ENCODE measurements at regions of chr20 and their contacts with region 1.

Region 1: DNA sequence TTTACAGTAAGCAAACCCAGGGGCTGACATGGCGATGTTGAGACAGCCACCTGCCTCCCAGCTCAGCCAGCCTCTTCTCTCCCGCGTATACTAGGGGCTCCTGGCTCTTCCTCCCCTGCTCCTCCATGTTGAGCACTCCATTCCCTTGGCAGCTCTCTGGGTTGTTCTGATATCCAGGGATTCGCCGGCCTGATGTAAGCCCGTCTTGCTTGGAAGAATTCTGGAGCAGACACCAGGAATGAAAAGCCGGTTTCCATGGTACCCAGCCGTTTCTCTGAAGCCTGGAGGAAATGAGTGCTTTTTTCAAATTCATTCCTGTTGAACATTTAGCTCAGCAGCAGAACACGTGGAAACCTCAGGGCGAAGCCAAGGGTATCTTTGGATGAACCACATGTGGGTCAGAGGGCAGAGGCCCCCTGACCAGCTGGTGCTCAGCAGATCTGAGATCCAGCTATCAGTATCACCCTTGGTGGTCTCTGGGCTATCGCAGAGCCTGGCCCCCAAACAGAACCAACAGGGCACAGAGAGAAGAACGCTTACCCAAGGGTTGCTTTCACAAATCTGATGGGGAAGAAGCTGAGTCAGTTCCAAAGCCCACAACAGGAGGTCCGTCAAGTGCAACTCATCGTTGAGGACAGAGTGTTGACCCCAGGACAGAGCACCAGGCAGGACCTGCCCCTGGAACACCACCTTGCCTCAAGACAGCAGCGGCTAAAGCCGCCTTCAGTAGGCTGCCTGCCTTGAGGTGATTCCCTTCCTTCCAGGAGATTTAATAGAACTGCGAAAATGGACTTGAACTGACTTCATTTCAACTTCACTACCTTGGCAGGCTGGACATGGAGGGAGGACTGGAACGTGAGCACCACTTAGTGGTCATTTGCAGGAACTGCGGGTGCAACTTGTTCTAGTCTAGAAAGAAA is 96.1 kb upstream of the RIN2 start:
- DNase-seq: peak; percentile 67 to 72
- H3K4me3 ChIP-seq: no peak overlapping the region
- H3K4me3 Mint-ChIP-seq: no peak overlapping the region
- H3K27ac Mint-ChIP-seq: no peak overlapping the region
- H3K4me1 ChIP-seq: no peaks in the 10 kb centered on the region
- H3K4me1 Mint-ChIP-seq: peaks cover 10% of the 10 kb centered on the region
- H3K27me3 ChIP-seq: 0 out of 2 replicates have a peak, but pooled peaks cover 3% of the 10 kb centered on the region
- H3K27me3 Mint-ChIP-seq: peaks cover 27% of the 10 kb centered on the region
- CTCF ChIP-seq: peak; percentile 91 to 94

Region 2: GRCh38 chr20:19205977-19206396 is 456.0 kb before region 1 on chr20:
- CTCF ChIA-PET with region 1: no interaction called
- POLR2A ChIA-PET with region 1: no interaction called
- intact Hi-C with region 1: loop called (anchors 1 kb)
- DNase-seq: peak; percentile 70 to 86
- H3K4me3 ChIP-seq: no peak overlapping the region
- H3K4me3 Mint-ChIP-seq: no peak overlapping the region
- H3K27ac Mint-ChIP-seq: no peak overlapping the region
- H3K4me1 ChIP-seq: no peaks in the 10 kb centered on the region
- H3K4me1 Mint-ChIP-seq: no peaks in the 10 kb centered on the region
- H3K27me3 ChIP-seq: no peaks in the 10 kb centered on the region
- H3K27me3 Mint-ChIP-seq: peaks cover 29% of the 10 kb centered on the region
- CTCF ChIP-seq: peak; percentile 90 to 95

Region 3: DNA sequence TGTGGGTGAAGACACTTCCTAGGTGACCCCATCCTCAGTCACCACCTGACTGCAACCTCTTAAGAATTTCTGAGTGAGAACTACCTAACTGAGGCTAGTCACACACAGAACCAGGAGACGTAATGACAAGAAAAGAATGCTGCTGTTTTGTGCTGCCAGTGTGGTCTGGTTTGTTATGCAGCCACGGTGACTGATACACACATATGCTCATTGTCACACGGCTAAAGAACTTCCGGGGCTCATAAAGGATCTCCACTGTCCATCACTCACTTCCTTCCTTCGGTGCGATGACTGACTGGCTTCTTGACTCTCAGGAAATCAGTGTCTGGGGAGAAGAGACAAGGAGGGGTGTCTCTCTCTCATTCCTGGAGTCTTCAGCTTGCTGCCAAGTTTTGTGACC is 361.6 kb before region 1 on chr20:
- CTCF ChIA-PET with region 1: interaction called, 14 read pairs
- POLR2A ChIA-PET with region 1: no interaction called
- intact Hi-C with region 1: no loop called
- DNase-seq: no peak
- H3K4me3 ChIP-seq: no peak overlapping the region
- H3K4me3 Mint-ChIP-seq: no peak overlapping the region
- H3K27ac Mint-ChIP-seq: no peak overlapping the region
- H3K4me1 ChIP-seq: no peaks in the 10 kb centered on the region
- H3K4me1 Mint-ChIP-seq: peaks cover 7% of the 10 kb centered on the region
- H3K27me3 ChIP-seq: no peaks in the 10 kb centered on the region
- H3K27me3 Mint-ChIP-seq: peaks cover 2% of the 10 kb centered on the region
- CTCF ChIP-seq: no peak

Region 4: DNA sequence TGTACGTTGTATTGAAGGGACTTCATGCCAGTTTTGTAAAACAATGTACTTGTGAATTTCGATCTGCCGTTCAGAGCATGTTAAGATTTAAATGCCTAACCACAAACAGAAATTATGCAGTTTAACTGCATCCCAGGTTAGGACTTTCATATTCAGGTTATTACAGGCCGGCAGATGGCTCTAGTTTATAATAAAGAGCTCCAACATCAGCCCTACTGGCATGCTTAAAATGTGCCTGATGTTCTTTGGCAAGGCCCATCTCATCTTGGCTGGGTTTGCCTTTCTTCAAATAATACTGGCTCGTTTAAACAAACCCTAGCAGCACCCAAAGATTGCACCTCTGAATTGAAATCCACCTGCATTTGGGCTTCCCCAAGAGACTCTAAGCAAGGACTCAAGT is 73.2 kb before region 1 on chr20:
- CTCF ChIA-PET with region 1: interaction called, 37 read pairs
- POLR2A ChIA-PET with region 1: no interaction called
- intact Hi-C with region 1: loop called (anchors 1 kb)
- DNase-seq: no peak
- H3K4me3 ChIP-seq: no peak overlapping the region
- H3K4me3 Mint-ChIP-seq: no peak overlapping the region
- H3K27ac Mint-ChIP-seq: no peak overlapping the region
- H3K4me1 ChIP-seq: no peaks in the 10 kb centered on the region
- H3K4me1 Mint-ChIP-seq: no peaks in the 10 kb centered on the region
- H3K27me3 ChIP-seq: no peaks in the 10 kb centered on the region; the same call in 1 of the 2 replicates
- H3K27me3 Mint-ChIP-seq: peaks cover 4% of the 10 kb centered on the region
- CTCF ChIP-seq: peak in 1 of 2 experiments; percentile 41

Region 5: DNA sequence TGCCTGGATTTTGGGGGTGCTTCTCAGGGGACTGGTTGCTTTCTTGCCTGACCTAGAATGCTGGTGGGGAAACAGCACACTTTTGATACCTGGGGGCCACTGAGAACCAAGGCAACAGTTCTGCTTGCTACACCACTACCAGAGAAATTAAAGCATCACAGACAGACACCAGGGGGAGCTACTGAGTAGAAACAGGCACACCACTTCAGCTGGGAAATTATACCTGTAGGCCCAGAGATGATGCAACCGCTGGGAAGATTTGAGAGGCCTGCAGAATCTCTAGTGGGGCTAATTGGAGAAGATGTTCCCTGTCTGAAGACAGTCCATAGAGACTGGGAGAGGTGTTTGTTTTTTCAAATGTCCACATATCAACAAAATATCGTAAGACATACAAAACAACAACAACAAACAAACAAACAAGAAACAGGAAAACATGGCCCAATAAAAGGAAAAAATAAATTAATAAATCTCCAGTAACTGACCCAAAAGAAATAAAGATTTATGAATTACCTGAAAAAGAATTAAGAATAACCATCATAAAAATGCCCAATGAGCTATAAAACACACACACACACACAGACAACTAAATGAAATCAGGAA is 33.3 kb before region 1 on chr20:
- CTCF ChIA-PET with region 1: interaction called, 3 read pairs
- POLR2A ChIA-PET with region 1: no interaction called
- intact Hi-C with region 1: loop called (anchors 1 kb)
- DNase-seq: peak; percentile 84 to 89
- H3K4me3 ChIP-seq: no peak overlapping the region
- H3K4me3 Mint-ChIP-seq: no peak overlapping the region
- H3K27ac Mint-ChIP-seq: no peak overlapping the region
- H3K4me1 ChIP-seq: no peaks in the 10 kb centered on the region
- H3K4me1 Mint-ChIP-seq: peaks cover 6% of the 10 kb centered on the region
- H3K27me3 ChIP-seq: no peaks in the 10 kb centered on the region
- H3K27me3 Mint-ChIP-seq: no peaks in the 10 kb centered on the region
- CTCF ChIP-seq: peak; percentile 76 to 80

Measured in Caco-2 (cell line).